CD14-positive monocyte (primary cell): ENCODE measurements at regions of chr3 and their contacts with region 1.

Region 1: GRCh38 chr3:188389711-188390342 is 235.9 kb downstream of the LPP start:
- DNase-seq: peak; percentile 88 to 94 (median 89)
- H3K4me3 ChIP-seq: peak overlapping the region in 1 of 3 experiments; percentile 45
- H3K4me3 Mint-ChIP-seq: peak overlapping the region; percentile 37 to 46
- H3K27ac ChIP-seq: peak overlapping the region; percentile 96 to 98
- H3K27ac Mint-ChIP-seq: peak overlapping the region; percentile 98 to 99 (median 99)
- H3K4me1 ChIP-seq: peaks cover 59 to 71% of the 10 kb centered on the region in 2 donors
- H3K4me1 Mint-ChIP-seq: peaks cover 60% of the 10 kb centered on the region
- H3K27me3 ChIP-seq: no peaks in the 10 kb centered on the region
- H3K27me3 Mint-ChIP-seq: no peaks in the 10 kb centered on the region
- CTCF ChIP-seq: no peak

Region 2: DNA sequence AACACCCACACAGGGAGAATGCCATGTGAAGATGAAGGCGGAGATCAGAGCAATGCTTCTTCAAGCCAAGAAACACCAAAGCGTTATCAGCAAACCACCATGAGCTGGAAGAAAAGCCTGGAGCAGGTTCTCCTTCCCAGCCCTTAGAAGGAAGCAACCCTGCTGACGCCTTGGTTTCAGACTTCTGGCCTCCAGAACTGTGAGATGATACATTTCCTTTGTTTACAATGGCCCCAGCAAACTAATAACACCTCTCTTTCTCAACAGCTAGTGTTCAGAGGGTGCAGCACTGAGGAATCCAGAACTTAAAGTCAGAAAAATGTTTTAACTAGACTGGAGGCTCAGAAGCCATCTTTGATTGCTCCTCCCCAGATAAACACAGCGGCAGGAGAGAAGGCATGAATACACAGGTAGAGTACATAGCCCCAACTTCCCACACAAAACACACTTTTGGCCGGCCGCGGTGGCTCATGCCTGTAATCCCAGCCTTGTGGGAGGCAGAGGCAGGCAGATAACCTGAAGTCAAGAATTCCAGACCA is 368.3 kb before region 1 on chr3:
- intact Hi-C with region 1: no loop called
- DNase-seq: no peak
- H3K4me3 ChIP-seq: no peak overlapping the region
- H3K4me3 Mint-ChIP-seq: no peak overlapping the region
- H3K27ac ChIP-seq: no peak overlapping the region
- H3K27ac Mint-ChIP-seq: no peak overlapping the region
- H3K4me1 ChIP-seq: no peaks in the 10 kb centered on the region
- H3K4me1 Mint-ChIP-seq: peaks cover 3% of the 10 kb centered on the region
- H3K27me3 ChIP-seq: no peaks in the 10 kb centered on the region
- H3K27me3 Mint-ChIP-seq: peaks cover 0 to 3% (median 1%) of the 10 kb centered on the region in 3 donors
- CTCF ChIP-seq: no peak

Region 3: GRCh38 chr3:188154014-188154808 is 235.6 kb before region 1 on chr3 and contains the start of gene LPP:
- intact Hi-C with region 1: loop called in 1 of 2 experiments (anchors 10 kb)
- DNase-seq: peak; percentile 84 to 95 (median 91)
- H3K4me3 ChIP-seq: peak within 1 kb of the TSS; percentile 64 to 86 (median 69)
- H3K4me3 Mint-ChIP-seq: peak within 1 kb of the TSS; percentile 95 to 96
- H3K27ac ChIP-seq: peak within 1 kb of the TSS; percentile 87 to 96
- H3K27ac Mint-ChIP-seq: peak within 1 kb of the TSS; percentile 93 to 97 (median 96)
- H3K4me1 ChIP-seq: peaks cover 20 to 34% of the 10 kb centered on the region in 2 donors
- H3K4me1 Mint-ChIP-seq: peaks cover 44% of the 10 kb centered on the region
- H3K27me3 ChIP-seq: no peaks in the 10 kb centered on the region
- H3K27me3 Mint-ChIP-seq: peaks cover 0 to 6% (median 0%) of the 10 kb centered on the region in 3 donors
- CTCF ChIP-seq: no peak
- polyA plus RNA-seq, gene LPP: 14.1 to 23.2 (median 15.3) TPM

Region 4: DNA sequence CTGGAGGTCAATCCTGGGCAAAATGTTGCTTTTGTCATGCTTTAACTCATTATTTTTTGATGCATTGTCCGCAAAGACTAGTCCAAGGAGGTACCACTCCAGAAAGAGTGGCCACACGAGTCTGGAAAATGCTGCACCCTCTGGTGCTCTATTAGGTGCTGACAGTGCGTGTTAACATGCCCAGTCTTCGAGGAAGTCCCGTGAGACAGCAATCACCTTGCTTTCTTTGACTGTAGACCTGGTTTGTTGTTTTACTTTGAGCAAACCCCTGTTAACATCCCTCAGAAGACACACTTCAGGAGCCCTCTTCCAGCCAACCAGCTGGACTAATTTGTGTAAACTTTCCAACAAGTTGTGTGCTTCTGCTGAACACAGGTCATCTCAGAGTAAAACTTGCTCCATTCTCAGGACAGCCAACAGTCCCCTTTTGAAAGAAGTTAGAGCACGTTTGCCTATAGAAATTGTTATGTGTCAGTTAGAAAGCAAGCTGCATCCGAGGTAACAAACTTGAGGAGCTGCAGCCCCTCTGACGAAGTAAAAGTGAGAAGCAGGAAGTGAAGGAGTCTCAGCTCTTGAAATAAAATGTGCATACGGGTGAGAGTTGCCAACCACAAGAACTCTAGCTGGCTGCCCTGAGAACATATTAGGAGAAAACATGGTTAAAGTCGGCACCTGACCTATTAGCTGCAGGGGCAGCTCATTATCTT is 30.9 kb before region 1 on chr3:
- intact Hi-C with region 1: no loop called
- DNase-seq: peak in 2 of 3 donors; percentile 11 to 22
- H3K4me3 ChIP-seq: peak overlapping the region; percentile 17 to 67 (median 61)
- H3K4me3 Mint-ChIP-seq: peak overlapping the region; percentile 64 to 91
- H3K27ac ChIP-seq: peak overlapping the region in 1 of 2 donors; percentile 23
- H3K27ac Mint-ChIP-seq: peak overlapping the region in 6 of 7 donors; percentile 28 to 68 (median 50)
- H3K4me1 ChIP-seq: peaks cover 16 to 18% of the 10 kb centered on the region in 2 donors
- H3K4me1 Mint-ChIP-seq: peaks cover 26% of the 10 kb centered on the region
- H3K27me3 ChIP-seq: no peaks in the 10 kb centered on the region
- H3K27me3 Mint-ChIP-seq: peaks cover 0 to 1% (median 1%) of the 10 kb centered on the region in 3 donors
- CTCF ChIP-seq: no peak

Region 5: GRCh38 chr3:188421836-188422540 is 32.2 kb after region 1 on chr3:
- intact Hi-C with region 1: loop called in 1 of 2 experiments (anchors 5 kb)
- DNase-seq: peak; percentile 75 to 91 (median 89)
- H3K4me3 ChIP-seq: peak overlapping the region in 1 of 3 experiments; percentile 47
- H3K4me3 Mint-ChIP-seq: peak overlapping the region; percentile 39 to 56
- H3K27ac ChIP-seq: peak overlapping the region; percentile 14 to 93
- H3K27ac Mint-ChIP-seq: peak overlapping the region; percentile 93 to 98 (median 97)
- H3K4me1 ChIP-seq: peaks cover 40 to 56% of the 10 kb centered on the region in 2 donors
- H3K4me1 Mint-ChIP-seq: peaks cover 63% of the 10 kb centered on the region
- H3K27me3 ChIP-seq: no peaks in the 10 kb centered on the region
- H3K27me3 Mint-ChIP-seq: no peaks in the 10 kb centered on the region
- CTCF ChIP-seq: no peak

Region 6: DNA sequence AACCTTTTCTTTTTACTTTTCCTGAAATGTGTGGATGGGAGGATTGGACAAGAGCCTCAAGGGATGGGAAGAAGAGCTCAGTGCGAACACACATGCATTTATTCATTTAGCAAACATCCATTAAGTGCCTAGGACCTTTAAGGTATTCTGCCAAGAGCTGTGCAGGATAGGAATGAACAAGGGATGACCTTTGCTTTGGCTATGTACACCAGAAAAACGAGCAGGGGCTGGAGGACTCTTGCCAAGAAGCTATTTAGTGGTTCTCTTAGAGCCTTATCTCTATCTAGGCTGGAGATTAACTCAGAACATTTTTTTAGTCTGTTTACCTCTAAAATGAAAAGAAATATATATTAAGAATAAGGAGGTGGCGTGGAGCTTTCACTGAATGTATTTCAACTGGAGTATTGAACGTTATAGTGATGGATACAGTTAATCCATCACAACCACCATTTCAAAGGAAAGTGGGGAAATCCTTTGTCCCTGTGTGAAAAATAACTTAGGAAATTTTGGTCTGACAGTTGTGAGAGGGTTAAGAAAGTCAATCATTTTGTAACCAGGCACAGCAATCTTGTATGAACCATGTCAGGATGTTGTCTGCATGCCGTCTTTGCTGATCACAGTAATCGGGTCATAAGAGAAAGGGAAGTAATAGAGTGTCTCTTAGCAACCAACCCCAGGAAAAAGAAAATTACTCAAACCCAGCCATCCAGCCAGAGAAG is 43.1 kb after region 1 on chr3:
- intact Hi-C with region 1: loop called (anchors 2 to 5 kb)
- DNase-seq: peak; percentile 75 to 86 (median 80)
- H3K4me3 ChIP-seq: peak overlapping the region in 2 of 3 experiments; percentile 43 to 60
- H3K4me3 Mint-ChIP-seq: peak overlapping the region; percentile 60 to 80
- H3K27ac ChIP-seq: peak overlapping the region; percentile 86 to 94
- H3K27ac Mint-ChIP-seq: peak overlapping the region; percentile 98 to 100 (median 100)
- H3K4me1 ChIP-seq: peaks cover 53 to 79% of the 10 kb centered on the region in 2 donors
- H3K4me1 Mint-ChIP-seq: peaks cover 62% of the 10 kb centered on the region
- H3K27me3 ChIP-seq: no peaks in the 10 kb centered on the region
- H3K27me3 Mint-ChIP-seq: no peaks in the 10 kb centered on the region
- CTCF ChIP-seq: no peak